ENCODE measurements at regions of chr3 and their contacts with region 1.

Region 1: GRCh38 chr3:30667280-30667651 is 60.9 kb downstream of the TGFBR2 start:
- DNase-seq: peak; percentile 36 to 57 (median 45)
- H3K4me3 ChIP-seq: no peak overlapping the region
- H3K4me3 Mint-ChIP-seq: peak overlapping the region in 6 of 8 donors; percentile 8 to 79 (median 48)
- H3K27ac ChIP-seq: peak overlapping the region; percentile 42
- H3K27ac Mint-ChIP-seq: peak overlapping the region; percentile 63 to 87 (median 83)
- H3K4me1 ChIP-seq: peaks cover 94% of the 10 kb centered on the region
- H3K4me1 Mint-ChIP-seq: peaks cover 73 to 97% (median 87%) of the 10 kb centered on the region in 4 donors
- H3K27me3 ChIP-seq: no peaks in the 10 kb centered on the region
- H3K27me3 Mint-ChIP-seq: no peaks in the 10 kb centered on the region

Region 2: DNA sequence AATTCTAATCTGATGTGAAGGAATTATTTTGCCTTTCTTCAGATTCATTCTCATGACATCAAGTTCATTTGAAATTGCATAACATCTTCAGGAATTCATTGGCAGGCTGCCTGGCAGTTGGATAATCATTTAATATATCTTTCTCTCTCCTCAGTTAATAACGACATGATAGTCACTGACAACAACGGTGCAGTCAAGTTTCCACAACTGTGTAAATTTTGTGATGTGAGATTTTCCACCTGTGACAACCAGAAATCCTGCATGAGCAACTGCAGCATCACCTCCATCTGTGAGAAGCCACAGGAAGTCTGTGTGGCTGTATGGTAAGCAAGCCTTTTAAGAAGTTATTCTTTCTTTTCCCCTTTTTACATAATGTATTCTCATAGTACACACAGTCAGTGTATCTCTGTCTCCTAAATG is 22.7 kb before region 1 on chr3:
- CTCF ChIA-PET with region 1: interaction called, 7 read pairs
- POLR2A ChIA-PET with region 1: interaction called, 37 read pairs
- intact Hi-C with region 1: no loop called
- DNase-seq: peak; percentile 61 to 87 (median 66)
- H3K4me3 ChIP-seq: peak overlapping the region in 1 of 2 donors; percentile 37
- H3K4me3 Mint-ChIP-seq: peak overlapping the region; percentile 71 to 86 (median 78)
- H3K27ac ChIP-seq: peak overlapping the region; percentile 66
- H3K27ac Mint-ChIP-seq: peak overlapping the region; percentile 88 to 97 (median 93)
- H3K4me1 ChIP-seq: peaks cover 99% of the 10 kb centered on the region
- H3K4me1 Mint-ChIP-seq: peaks cover 77 to 97% (median 87%) of the 10 kb centered on the region in 4 donors
- H3K27me3 ChIP-seq: no peaks in the 10 kb centered on the region
- H3K27me3 Mint-ChIP-seq: no peaks in the 10 kb centered on the region

Region 3: DNA sequence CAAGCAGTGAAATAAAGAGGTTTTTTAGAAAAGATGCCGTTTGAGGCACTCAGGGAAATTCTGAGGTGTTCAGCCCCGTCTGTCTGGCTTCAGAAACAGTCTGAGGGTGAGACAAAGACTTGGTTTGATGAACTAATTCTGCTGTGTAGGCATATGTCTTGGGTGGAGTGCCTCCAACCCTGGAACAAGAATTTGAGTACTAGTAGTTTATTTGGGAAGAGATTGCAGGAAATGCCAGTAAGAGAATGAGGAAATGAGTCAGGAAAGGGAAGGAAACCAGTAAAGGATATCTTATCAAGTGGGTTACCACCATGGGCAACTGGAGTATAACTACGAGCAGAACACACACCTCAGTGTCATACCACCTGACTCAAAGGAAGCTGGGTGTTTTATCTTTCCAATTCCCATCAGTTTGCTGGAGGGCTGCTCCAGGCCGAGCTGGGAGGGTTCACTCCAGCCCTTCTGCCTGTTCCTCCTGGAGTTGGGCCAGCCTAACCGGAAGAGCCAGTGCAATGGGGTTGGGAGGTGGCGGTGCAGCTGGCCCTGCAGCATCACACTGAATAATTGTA is 14.5 kb after region 1 on chr3:
- CTCF ChIA-PET with region 1: interaction called, 3 read pairs
- POLR2A ChIA-PET with region 1: interaction called, 12 read pairs
- intact Hi-C with region 1: loop called (anchors 1 kb)
- DNase-seq: no peak
- H3K4me3 ChIP-seq: no peak overlapping the region
- H3K4me3 Mint-ChIP-seq: peak overlapping the region in 7 of 8 donors; percentile 40 to 74 (median 58)
- H3K27ac ChIP-seq: no peak overlapping the region
- H3K27ac Mint-ChIP-seq: peak overlapping the region; percentile 40 to 89 (median 81)
- H3K4me1 ChIP-seq: peaks cover 87% of the 10 kb centered on the region
- H3K4me1 Mint-ChIP-seq: peaks cover 65 to 97% (median 82%) of the 10 kb centered on the region in 4 donors
- H3K27me3 ChIP-seq: no peaks in the 10 kb centered on the region
- H3K27me3 Mint-ChIP-seq: no peaks in the 10 kb centered on the region

Region 4: GRCh38 chr3:31247850-31248562 is 580.7 kb after region 1 on chr3:
- CTCF ChIA-PET with region 1: no interaction called
- POLR2A ChIA-PET with region 1: no interaction called
- intact Hi-C with region 1: no loop called
- DNase-seq: no peak
- H3K4me3 ChIP-seq: no peak overlapping the region
- H3K4me3 Mint-ChIP-seq: peak overlapping the region in 1 of 8 donors; percentile 0
- H3K27ac ChIP-seq: no peak overlapping the region
- H3K27ac Mint-ChIP-seq: no peak overlapping the region
- H3K4me1 ChIP-seq: peaks cover 15% of the 10 kb centered on the region
- H3K4me1 Mint-ChIP-seq: peaks cover 25 to 40% (median 34%) of the 10 kb centered on the region in 4 donors
- H3K27me3 ChIP-seq: no peaks in the 10 kb centered on the region
- H3K27me3 Mint-ChIP-seq: no peaks in the 10 kb centered on the region